ENCODE measurements at regions of chr11 and their contacts with region 1.

Region 1: GRCh38 chr11:65685981-65686380 is 23.3 kb upstream of the RELA start:
- DNase-seq: no peak
- ATAC-seq: no peak
- H3K4me3 Mint-ChIP-seq: no peak overlapping the region
- H3K27ac Mint-ChIP-seq: no peak overlapping the region
- H3K4me1 Mint-ChIP-seq: no peaks in the 10 kb centered on the region
- H3K27me3 Mint-ChIP-seq: peaks cover 2% of the 10 kb centered on the region

Region 2: GRCh38 chr11:65739022-65739421 is 53.0 kb after region 1 on chr11:
- CTCF ChIA-PET with region 1: interaction called, 5 read pairs
- POLR2A ChIA-PET with region 1: no interaction called
- intact Hi-C with region 1: loop called in 1 of 2 experiments (anchors 5 kb)
- DNase-seq: no peak
- ATAC-seq: no peak
- H3K4me3 Mint-ChIP-seq: no peak overlapping the region
- H3K27ac Mint-ChIP-seq: no peak overlapping the region
- H3K4me1 Mint-ChIP-seq: no peaks in the 10 kb centered on the region
- H3K27me3 Mint-ChIP-seq: peaks cover 20% of the 10 kb centered on the region

Measured in activated CD4-positive, alpha-beta T cell treated with anti-CD3 and anti-CD28 coated beads for 36 hours (primary cell).